ENCODE measurements at regions of chr2 and their contacts with region 1.

Region 1: GRCh38 chr2:98771721-98772524 is 41.0 kb upstream of the MGAT4A start:
- DNase-seq: peak; percentile 78
- ATAC-seq: peak; percentile 64
- H3K4me3 Mint-ChIP-seq: peak overlapping the region; percentile 85
- H3K27ac Mint-ChIP-seq: peak overlapping the region; percentile 98
- H3K4me1 Mint-ChIP-seq: peaks cover 69% of the 10 kb centered on the region
- H3K27me3 Mint-ChIP-seq: no peaks in the 10 kb centered on the region
- CTCF ChIP-seq: no peak

Region 2: DNA sequence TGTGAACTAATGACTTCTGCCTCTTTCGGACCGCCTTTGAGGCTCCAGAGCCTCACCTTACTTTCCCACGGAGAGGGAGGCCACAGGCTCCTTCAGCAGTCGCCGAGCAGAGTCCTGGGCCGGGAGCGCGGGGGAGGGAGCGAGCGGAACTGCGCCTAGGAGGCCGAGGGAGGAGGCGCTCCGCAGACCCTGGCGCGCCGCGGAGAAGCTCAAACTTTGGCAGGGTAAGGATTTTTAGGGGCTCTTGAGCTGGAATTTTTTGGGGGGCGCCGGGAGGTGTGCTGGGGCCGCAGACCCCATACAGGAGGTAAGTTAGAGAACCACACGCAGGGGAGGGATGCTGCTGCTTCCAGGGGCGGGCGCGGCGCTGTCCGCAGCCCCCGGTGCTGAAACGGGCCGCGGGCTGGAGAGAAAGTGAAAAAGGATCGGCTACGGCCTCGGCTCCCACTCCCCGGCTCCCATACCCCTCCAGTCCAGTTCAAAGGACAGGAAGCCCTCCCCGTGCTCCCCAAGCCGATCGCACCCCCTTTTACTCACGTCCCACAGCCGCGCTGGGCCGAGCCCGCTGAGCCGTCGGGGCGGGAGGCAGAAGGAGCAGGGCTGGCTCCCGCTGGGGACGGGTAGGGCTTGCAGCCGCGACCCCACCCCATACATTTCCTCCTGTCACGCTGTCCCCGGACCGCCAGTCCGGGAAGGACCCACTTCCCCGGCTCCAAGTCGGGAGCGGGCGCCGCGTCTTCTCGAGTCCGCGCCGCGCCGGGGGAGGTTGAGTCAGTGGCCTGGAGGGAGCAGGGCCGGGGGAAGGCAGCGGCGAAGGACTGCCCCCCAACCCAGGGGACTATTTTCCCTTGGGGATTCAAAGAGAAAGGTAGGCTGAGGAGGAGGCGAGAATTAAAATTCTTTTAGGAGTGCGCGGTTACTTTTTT is 425.3 kb before region 1 on chr2 and contains the start of gene CNGA3:
- CTCF ChIA-PET with region 1: no interaction called
- POLR2A ChIA-PET with region 1: no interaction called
- intact Hi-C with region 1: no loop called
- DNase-seq: peak; percentile 40
- ATAC-seq: no peak
- H3K4me3 Mint-ChIP-seq: no peak within 1 kb of the TSS
- H3K27ac Mint-ChIP-seq: no peak within 1 kb of the TSS
- H3K4me1 Mint-ChIP-seq: peaks cover 6% of the 10 kb centered on the region
- H3K27me3 Mint-ChIP-seq: peaks cover 53% of the 10 kb centered on the region
- CTCF ChIP-seq: no peak
- total RNA-seq, gene CNGA3: not detected

Region 3: GRCh38 chr2:98654699-98655495 is 117.0 kb before region 1 on chr2:
- CTCF ChIA-PET with region 1: interaction called, 10 read pairs
- POLR2A ChIA-PET with region 1: interaction called, 8 read pairs
- intact Hi-C with region 1: loop called (anchors 5 kb)
- DNase-seq: peak; percentile 76
- ATAC-seq: peak; percentile 64
- H3K4me3 Mint-ChIP-seq: peak overlapping the region; percentile 51
- H3K27ac Mint-ChIP-seq: peak overlapping the region; percentile 88
- H3K4me1 Mint-ChIP-seq: peaks cover 78% of the 10 kb centered on the region
- H3K27me3 Mint-ChIP-seq: no peaks in the 10 kb centered on the region
- CTCF ChIP-seq: no peak

Region 4: GRCh38 chr2:98736464-98736889 is 35.4 kb before region 1 on chr2:
- CTCF ChIA-PET with region 1: interaction called, 18 read pairs
- POLR2A ChIA-PET with region 1: interaction called, 85 read pairs
- intact Hi-C with region 1: loop called (anchors 2 kb)
- DNase-seq: peak; percentile 64
- ATAC-seq: peak; percentile 81
- H3K4me3 Mint-ChIP-seq: peak overlapping the region; percentile 45
- H3K27ac Mint-ChIP-seq: peak overlapping the region; percentile 86
- H3K4me1 Mint-ChIP-seq: peaks cover 74% of the 10 kb centered on the region
- H3K27me3 Mint-ChIP-seq: no peaks in the 10 kb centered on the region
- CTCF ChIP-seq: no peak

Region 5: GRCh38 chr2:98757904-98758421 is 14.0 kb before region 1 on chr2:
- CTCF ChIA-PET with region 1: interaction called, 22 read pairs
- POLR2A ChIA-PET with region 1: interaction called, 38 read pairs
- intact Hi-C with region 1: no loop called
- DNase-seq: peak; percentile 73
- ATAC-seq: peak; percentile 69
- H3K4me3 Mint-ChIP-seq: peak overlapping the region; percentile 57
- H3K27ac Mint-ChIP-seq: peak overlapping the region; percentile 89
- H3K4me1 Mint-ChIP-seq: peaks cover 50% of the 10 kb centered on the region
- H3K27me3 Mint-ChIP-seq: no peaks in the 10 kb centered on the region
- CTCF ChIP-seq: no peak

Region 6: GRCh38 chr2:98828793-98829371 is 57.0 kb after region 1 on chr2:
- CTCF ChIA-PET with region 1: interaction called, 8 read pairs
- POLR2A ChIA-PET with region 1: interaction called, 4 read pairs
- intact Hi-C with region 1: loop called (anchors 5 kb)
- DNase-seq: no peak
- ATAC-seq: no peak
- H3K4me3 Mint-ChIP-seq: no peak overlapping the region
- H3K27ac Mint-ChIP-seq: peak overlapping the region; percentile 21
- H3K4me1 Mint-ChIP-seq: peaks cover 39% of the 10 kb centered on the region
- H3K27me3 Mint-ChIP-seq: no peaks in the 10 kb centered on the region
- CTCF ChIP-seq: no peak